ENCODE measurements at regions of chrX and their contacts with region 1.

Region 1: DNA sequence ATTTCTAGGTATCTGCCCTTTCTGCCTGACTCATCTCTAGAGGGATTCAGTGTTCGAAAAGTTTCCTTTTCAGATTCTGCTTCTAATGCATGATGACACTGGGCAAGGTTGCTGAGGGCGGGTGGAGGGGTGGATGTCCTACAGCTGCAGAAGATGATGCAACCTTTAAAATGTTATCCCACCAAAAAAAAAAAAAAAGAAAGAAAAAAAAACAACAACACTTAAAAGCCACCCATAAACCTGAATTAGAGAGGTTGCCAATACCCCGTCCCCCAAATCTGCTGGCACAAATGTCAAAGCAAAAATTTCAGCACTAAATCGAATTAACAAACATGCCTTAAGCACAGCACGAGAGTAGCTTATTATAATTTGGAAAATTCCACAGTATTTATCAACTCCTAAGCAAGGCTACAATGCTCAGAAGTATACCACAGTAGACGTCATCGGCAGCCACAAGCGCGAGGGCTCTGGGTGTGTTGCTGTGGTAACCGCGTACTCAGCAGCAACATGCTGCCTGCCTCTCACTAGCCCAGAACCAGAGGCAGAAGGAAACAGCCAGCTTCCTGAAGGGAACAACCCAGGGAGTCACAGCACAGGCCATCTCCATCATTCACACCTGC is 167.5 kb upstream of the MAP3K15 start:
- DNase-seq: peak; percentile 74
- ATAC-seq: peak; percentile 85
- H3K4me3 ChIP-seq: no peak overlapping the region
- H3K4me3 Mint-ChIP-seq: peak overlapping the region; percentile 62
- H3K27ac ChIP-seq: peak overlapping the region in 1 of 2 donors; percentile 62
- H3K27ac Mint-ChIP-seq: peak overlapping the region; percentile 92
- H3K4me1 ChIP-seq: peaks cover 27 to 40% of the 10 kb centered on the region in 2 donors
- H3K4me1 Mint-ChIP-seq: peaks cover 71% of the 10 kb centered on the region
- H3K27me3 ChIP-seq: no peaks in the 10 kb centered on the region
- H3K27me3 Mint-ChIP-seq: no peaks in the 10 kb centered on the region
- CTCF ChIP-seq: no peak

Region 2: GRCh38 chrX:19630228-19630627 is 52.6 kb before region 1 on chrX:
- CTCF ChIA-PET with region 1: no interaction called
- POLR2A ChIA-PET with region 1: no interaction called
- intact Hi-C with region 1: loop called (anchors 10 kb)
- DNase-seq: peak; percentile 27
- ATAC-seq: no peak
- H3K4me3 ChIP-seq: no peak overlapping the region
- H3K4me3 Mint-ChIP-seq: peak overlapping the region; percentile 61
- H3K27ac ChIP-seq: peak overlapping the region; percentile 6 to 37
- H3K27ac Mint-ChIP-seq: peak overlapping the region; percentile 43
- H3K4me1 ChIP-seq: peaks cover 16 to 22% of the 10 kb centered on the region in 2 donors
- H3K4me1 Mint-ChIP-seq: peaks cover 24% of the 10 kb centered on the region
- H3K27me3 ChIP-seq: no peaks in the 10 kb centered on the region
- H3K27me3 Mint-ChIP-seq: no peaks in the 10 kb centered on the region
- CTCF ChIP-seq: no peak

Region 3: GRCh38 chrX:20141281-20142220 is 458.7 kb after region 1 on chrX and contains the start of gene EIF1AX:
- CTCF ChIA-PET with region 1: no interaction called
- POLR2A ChIA-PET with region 1: no interaction called
- intact Hi-C with region 1: loop called (anchors 5 kb)
- DNase-seq: peak; percentile 96
- ATAC-seq: peak; percentile 99
- H3K4me3 ChIP-seq: peak within 1 kb of the TSS; percentile 77 to 98 (median 86)
- H3K4me3 Mint-ChIP-seq: peak within 1 kb of the TSS; percentile 87
- H3K27ac ChIP-seq: peak within 1 kb of the TSS; percentile 74 to 92
- H3K27ac Mint-ChIP-seq: peak within 1 kb of the TSS; percentile 88
- H3K4me1 ChIP-seq: peaks cover 15 to 16% of the 10 kb centered on the region in 2 donors
- H3K4me1 Mint-ChIP-seq: peaks cover 21% of the 10 kb centered on the region
- H3K27me3 ChIP-seq: no peaks in the 10 kb centered on the region
- H3K27me3 Mint-ChIP-seq: no peaks in the 10 kb centered on the region
- CTCF ChIP-seq: no peak
- total RNA-seq, gene EIF1AX: 39.3 and 42.7 TPM in 2 replicates

Measured in B cell (primary cell).